Endothelial cell of umbilical vein (primary cell): ENCODE measurements at regions of chr2 and their contacts with region 1.

Region 1: GRCh38 chr2:222268311-222268990 is 30.3 kb downstream of the PAX3 start:
- DNase-seq: no peak
- H3K4me3 ChIP-seq: no peak overlapping the region
- H3K27ac ChIP-seq: no peak overlapping the region
- H3K4me1 ChIP-seq: no peaks in the 10 kb centered on the region
- H3K27me3 ChIP-seq: no peaks in the 10 kb centered on the region
- CTCF ChIP-seq: no peak
- POLR2A ChIP-seq: no peak

Region 2: DNA sequence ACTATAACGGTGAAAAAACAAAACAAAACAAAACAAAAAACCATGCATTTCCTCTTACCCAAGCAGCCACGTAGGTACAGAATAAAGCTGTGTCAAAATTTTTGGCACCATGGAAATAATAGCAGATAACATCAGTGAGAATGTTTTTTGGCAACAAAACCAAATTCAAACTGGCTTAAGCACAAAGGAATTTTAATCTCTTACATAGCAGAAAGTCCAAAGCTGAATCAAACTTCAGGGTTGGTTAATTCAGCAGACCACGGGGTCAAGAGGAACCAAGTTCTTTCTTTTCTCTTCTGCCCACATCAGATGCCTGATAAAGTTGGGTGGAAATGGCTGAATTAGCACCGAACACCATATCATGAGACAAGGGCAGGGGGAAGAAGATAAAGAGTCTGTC is 99.1 kb before region 1 on chr2:
- CTCF ChIA-PET with region 1: no interaction called
- POLR2A ChIA-PET with region 1: no interaction called
- dilution Hi-C with region 1: no loop called
- intact Hi-C with region 1: no loop called
- DNase-seq: no peak
- H3K4me3 ChIP-seq: no peak overlapping the region
- H3K27ac ChIP-seq: no peak overlapping the region
- H3K4me1 ChIP-seq: no peaks in the 10 kb centered on the region
- H3K27me3 ChIP-seq: no peaks in the 10 kb centered on the region
- CTCF ChIP-seq: no peak
- POLR2A ChIP-seq: no peak

Region 3: GRCh38 chr2:222283634-222284033 is 15.2 kb after region 1 on chr2:
- CTCF ChIA-PET with region 1: interaction called, 3 read pairs
- POLR2A ChIA-PET with region 1: no interaction called
- dilution Hi-C with region 1: no loop called
- intact Hi-C with region 1: loop called (anchors 1 kb)
- DNase-seq: no peak
- H3K4me3 ChIP-seq: no peak overlapping the region
- H3K27ac ChIP-seq: no peak overlapping the region
- H3K4me1 ChIP-seq: no peaks in the 10 kb centered on the region
- H3K27me3 ChIP-seq: peaks cover 13 to 52% of the 10 kb centered on the region in 2 experiments
- CTCF ChIP-seq: no peak
- POLR2A ChIP-seq: no peak

Region 4: GRCh38 chr2:222358876-222359275 is 90.4 kb after region 1 on chr2:
- CTCF ChIA-PET with region 1: no interaction called
- POLR2A ChIA-PET with region 1: no interaction called
- dilution Hi-C with region 1: no loop called
- intact Hi-C with region 1: no loop called
- DNase-seq: peak; percentile 75
- H3K4me3 ChIP-seq: no peak overlapping the region
- H3K27ac ChIP-seq: no peak overlapping the region
- H3K4me1 ChIP-seq: peaks cover 9% of the 10 kb centered on the region
- H3K27me3 ChIP-seq: peaks cover 0 to 1% of the 10 kb centered on the region in 2 experiments
- CTCF ChIP-seq: no peak
- POLR2A ChIP-seq: no peak